ENCODE measurements at regions of chr2 and their contacts with region 1.

Region 1: GRCh38 chr2:231227309-231228162 is 29.1 kb downstream of the ARMC9 start:
- DNase-seq: peak; percentile 85
- H3K4me3 ChIP-seq: peak overlapping the region in 1 of 2 experiments; percentile 45; a peak in 1 of 4 replicates
- H3K27ac ChIP-seq: no peak overlapping the region; a peak in 1 of 4 replicates
- H3K4me1 ChIP-seq: peaks cover 0 to 15% of the 10 kb centered on the region in 2 experiments; a peak in 2 of 4 replicates
- H3K27me3 ChIP-seq: no peaks in the 10 kb centered on the region
- CTCF ChIP-seq: peak; percentile 80
- EP300 ChIP-seq: no peak
- RAD21 ChIP-seq: peak; percentile 94

Region 2: DNA sequence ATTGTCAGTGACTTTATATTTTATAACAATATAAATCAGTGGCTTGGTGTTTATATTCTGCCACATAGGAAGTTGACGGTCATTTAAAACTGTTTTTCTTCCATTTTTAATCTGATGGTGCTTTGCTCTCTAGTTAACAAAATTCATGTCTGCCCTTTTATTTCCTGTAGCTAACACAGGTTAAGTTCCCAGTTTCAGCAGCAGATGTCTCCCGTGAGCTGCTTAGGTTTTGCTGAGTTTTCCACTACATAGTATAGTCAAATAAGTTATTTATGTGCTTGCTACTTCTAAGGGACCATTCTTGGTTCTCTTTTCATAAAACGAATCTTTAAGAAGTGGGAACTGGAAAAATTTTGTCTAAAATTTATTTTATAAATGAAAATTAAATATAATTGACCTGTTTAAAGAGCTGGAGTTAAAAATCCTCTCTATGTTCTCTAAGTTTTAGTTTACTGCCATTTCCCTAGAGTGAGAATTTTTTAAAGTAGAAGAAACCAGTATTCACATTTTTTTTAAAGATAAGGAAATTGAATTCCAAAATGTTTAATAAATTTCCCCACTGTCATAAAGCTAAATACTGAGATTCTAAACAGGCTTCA is 123.3 kb before region 1 on chr2:
- CTCF ChIA-PET with region 1: interaction called, 27 read pairs
- POLR2A ChIA-PET with region 1: no interaction called
- DNase-seq: peak; percentile 42
- H3K4me3 ChIP-seq: no peak overlapping the region
- H3K27ac ChIP-seq: peak overlapping the region; percentile 54 to 60; a peak in 2 of 4 replicates
- H3K4me1 ChIP-seq: peaks cover 0 to 4% of the 10 kb centered on the region in 2 experiments; a peak in 2 of 4 replicates
- H3K27me3 ChIP-seq: no peaks in the 10 kb centered on the region
- CTCF ChIP-seq: peak; percentile 89
- EP300 ChIP-seq: no peak
- RAD21 ChIP-seq: peak; percentile 95

Region 3: DNA sequence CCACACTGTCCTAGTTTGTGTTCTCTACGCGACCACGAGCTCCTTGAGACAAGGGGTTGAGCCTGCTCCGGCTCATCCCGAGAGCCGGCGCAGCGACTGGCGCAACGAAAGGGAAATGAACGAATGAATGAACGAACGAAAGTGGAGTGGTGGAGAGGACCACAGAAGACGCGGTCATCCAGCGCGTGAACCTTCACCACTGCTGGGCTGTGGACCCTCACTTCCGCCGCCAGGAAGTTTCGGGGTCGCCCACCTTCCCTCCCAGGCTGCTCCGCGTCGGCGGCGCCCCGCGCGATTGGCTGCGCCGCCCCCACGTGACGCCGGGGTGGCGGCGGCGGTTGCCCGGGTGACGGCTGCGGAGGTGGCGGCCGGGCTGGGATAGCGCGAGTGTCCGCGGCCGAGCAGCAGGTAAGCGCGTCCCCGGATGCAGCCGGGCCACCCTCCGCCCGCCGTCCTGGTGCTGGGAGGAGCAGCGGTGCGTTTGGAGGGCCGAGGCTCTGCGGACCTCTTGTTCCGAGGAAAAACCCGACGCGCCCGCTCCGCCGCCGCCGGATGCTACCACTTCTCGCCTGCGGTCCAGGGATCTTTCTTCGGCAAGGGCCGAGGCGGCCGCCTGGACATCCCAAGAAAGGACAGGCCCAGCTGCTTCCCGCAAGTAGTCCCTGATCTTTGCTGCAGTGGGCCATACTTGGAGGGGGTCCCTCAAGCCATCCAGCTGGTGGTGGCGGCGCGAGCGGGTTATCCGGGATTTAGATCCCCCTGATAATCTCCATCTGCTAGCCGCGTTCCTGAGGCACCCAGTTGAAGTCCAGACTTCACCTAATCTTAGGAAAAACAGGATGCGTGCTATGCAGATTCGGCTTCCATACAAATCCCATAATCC is 29.0 kb before region 1 on chr2 and contains the start of gene ARMC9:
- CTCF ChIA-PET with region 1: interaction called, 12 read pairs
- POLR2A ChIA-PET with region 1: no interaction called
- DNase-seq: peak; percentile 99
- H3K4me3 ChIP-seq: peak within 1 kb of the TSS; percentile 77 to 83
- H3K27ac ChIP-seq: peak within 1 kb of the TSS; percentile 76 to 90
- H3K4me1 ChIP-seq: peaks cover 10 to 17% of the 10 kb centered on the region in 2 experiments; a peak in 2 of 4 replicates
- H3K27me3 ChIP-seq: no peaks in the 10 kb centered on the region
- CTCF ChIP-seq: no peak
- EP300 ChIP-seq: peak in 1 of 2 experiments; percentile 14; a peak in 1 of 4 replicates
- RAD21 ChIP-seq: no peak
- polyA plus RNA-seq, gene ARMC9: 25.3 and 38.5 TPM in 2 replicates

Region 4: GRCh38 chr2:231238689-231239088 is 11.2 kb after region 1 on chr2:
- CTCF ChIA-PET with region 1: interaction called, 24 read pairs
- POLR2A ChIA-PET with region 1: no interaction called
- DNase-seq: no peak
- H3K4me3 ChIP-seq: no peak overlapping the region
- H3K27ac ChIP-seq: no peak overlapping the region
- H3K4me1 ChIP-seq: no peaks in the 10 kb centered on the region
- H3K27me3 ChIP-seq: no peaks in the 10 kb centered on the region
- CTCF ChIP-seq: no peak
- EP300 ChIP-seq: no peak
- RAD21 ChIP-seq: no peak

Region 5: GRCh38 chr2:231260442-231261208 is 33.1 kb after region 1 on chr2:
- CTCF ChIA-PET with region 1: interaction called, 20 read pairs
- POLR2A ChIA-PET with region 1: no interaction called
- DNase-seq: no peak
- H3K4me3 ChIP-seq: no peak overlapping the region
- H3K27ac ChIP-seq: no peak overlapping the region
- H3K4me1 ChIP-seq: no peaks in the 10 kb centered on the region
- H3K27me3 ChIP-seq: no peaks in the 10 kb centered on the region
- CTCF ChIP-seq: no peak
- EP300 ChIP-seq: no peak
- RAD21 ChIP-seq: no peak

Region 6: GRCh38 chr2:231297108-231297908 is 69.8 kb after region 1 on chr2:
- CTCF ChIA-PET with region 1: interaction called, 44 read pairs
- POLR2A ChIA-PET with region 1: no interaction called
- DNase-seq: peak; percentile 87
- H3K4me3 ChIP-seq: no peak overlapping the region; a peak in 1 of 4 replicates
- H3K27ac ChIP-seq: no peak overlapping the region; a peak in 1 of 4 replicates
- H3K4me1 ChIP-seq: no peaks in the 10 kb centered on the region; a peak in 1 of 4 replicates
- H3K27me3 ChIP-seq: no peaks in the 10 kb centered on the region
- CTCF ChIP-seq: peak; percentile 73
- EP300 ChIP-seq: no peak
- RAD21 ChIP-seq: peak; percentile 80

Region 7: GRCh38 chr2:231425811-231426728 is 198.5 kb after region 1 on chr2:
- CTCF ChIA-PET with region 1: interaction called, 250 read pairs
- POLR2A ChIA-PET with region 1: no interaction called
- DNase-seq: no peak
- H3K4me3 ChIP-seq: no peak overlapping the region
- H3K27ac ChIP-seq: no peak overlapping the region
- H3K4me1 ChIP-seq: no peaks in the 10 kb centered on the region
- H3K27me3 ChIP-seq: no peaks in the 10 kb centered on the region
- CTCF ChIP-seq: no peak
- EP300 ChIP-seq: no peak
- RAD21 ChIP-seq: no peak

Measured in SK-N-SH (cell line).